IMR-90 (cell line): ENCODE measurements at regions of chr12 and their contacts with region 1.

Region 1: DNA sequence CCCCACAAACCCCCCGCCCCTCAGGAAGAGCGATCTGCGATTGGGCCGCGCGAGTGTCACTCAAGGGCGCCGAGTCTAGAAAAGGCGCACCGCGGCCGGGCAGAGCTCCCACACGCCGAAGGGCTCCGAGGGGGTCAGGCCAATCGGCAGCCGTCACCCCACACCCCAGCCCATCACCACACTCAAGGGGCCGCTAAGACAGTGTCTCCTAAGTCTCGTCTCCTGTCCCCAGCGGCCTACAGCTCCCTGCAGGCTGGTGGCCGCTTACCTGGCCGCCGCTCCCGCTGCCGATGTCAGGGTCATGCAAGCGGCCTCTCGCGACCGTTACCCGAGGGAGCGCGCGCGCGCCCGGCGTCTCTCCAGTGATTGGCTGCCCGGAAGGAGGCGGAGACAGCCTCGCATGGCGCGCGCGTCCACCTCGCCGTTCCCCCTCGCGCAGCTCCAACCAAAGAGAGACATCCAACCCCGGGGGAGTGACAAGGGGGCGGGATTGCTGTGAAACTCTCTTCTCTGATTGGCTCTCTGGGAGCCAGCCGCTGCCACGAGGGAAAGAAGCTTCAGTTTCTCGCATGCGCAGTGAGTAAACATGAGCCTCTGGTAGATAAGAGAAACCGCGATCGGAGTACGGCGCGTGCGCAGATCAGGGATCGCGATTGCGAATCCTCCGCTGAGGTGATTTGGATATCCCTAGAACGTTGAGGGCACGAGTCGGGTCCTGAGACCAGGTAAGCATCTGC is at the starts of genes MPHOSPH9 and MTRFR:
- DNase-seq: peak; percentile 99
- ATAC-seq: peak; percentile 97
- H3K4me3 ChIP-seq: peak within 1 kb of the TSS; percentile 70
- H3K27ac ChIP-seq: peak within 1 kb of the TSS; percentile 87
- H3K4me1 ChIP-seq: peaks cover 3% of the 10 kb centered on the region
- H3K27me3 ChIP-seq: no peaks in the 10 kb centered on the region
- CTCF ChIP-seq: no peak
- POLR2A ChIP-seq: peak; percentile 99
- RAD21 ChIP-seq: no peak
- total RNA-seq, gene MPHOSPH9: 17.0 and 30.8 TPM in 2 replicates
- total RNA-seq, gene MTRFR: 10.2 and 12.2 TPM in 2 replicates

Region 2: DNA sequence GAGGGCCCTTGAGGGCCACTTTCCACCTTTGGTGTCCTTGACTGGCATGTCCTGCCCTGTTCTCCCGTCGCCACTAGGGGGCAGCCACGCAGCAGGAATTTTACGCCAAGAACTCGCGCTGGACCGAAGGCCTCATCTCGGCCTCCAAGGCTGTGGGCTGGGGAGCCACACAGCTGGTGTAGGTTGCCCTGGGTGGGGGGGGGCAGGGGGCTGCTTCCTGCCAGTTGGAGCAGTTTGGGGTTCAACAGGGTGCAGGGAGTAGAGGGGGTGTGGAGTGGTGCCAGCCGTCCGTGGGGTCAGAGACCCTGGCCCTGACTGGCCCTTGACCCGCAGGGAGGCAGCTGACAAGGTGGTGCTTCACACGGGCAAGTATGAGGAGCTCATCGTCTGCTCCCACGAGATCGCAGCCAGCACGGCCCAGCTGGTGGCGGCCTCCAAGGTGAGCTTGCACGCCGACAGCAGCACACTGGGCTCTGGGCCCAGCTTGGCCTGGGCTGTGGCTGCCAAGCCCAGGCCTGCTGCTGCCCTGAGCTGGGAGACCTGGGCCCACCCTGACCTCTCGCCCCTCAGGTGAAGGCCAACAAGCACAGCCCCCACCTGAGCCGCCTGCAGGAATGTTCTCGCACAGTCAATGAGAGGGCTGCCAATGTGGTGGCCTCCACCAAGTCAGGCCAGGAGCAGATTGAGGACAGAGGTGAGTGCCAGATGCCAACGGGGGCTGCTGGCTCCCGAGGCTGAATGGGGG is 372.5 kb before region 1 on chr12:
- CTCF ChIA-PET with region 1: no interaction called
- POLR2A ChIA-PET with region 1: no interaction called
- dilution Hi-C with region 1: no loop called
- in situ Hi-C with region 1: loop called (anchors 5 kb)
- intact Hi-C with region 1: loop called (anchors 1 kb)
- DNase-seq: peak; percentile 75
- ATAC-seq: peak; percentile 77
- H3K4me3 ChIP-seq: no peak overlapping the region
- H3K27ac ChIP-seq: no peak overlapping the region
- H3K4me1 ChIP-seq: peaks cover 3% of the 10 kb centered on the region; the same call in 1 of the 2 replicates
- H3K27me3 ChIP-seq: no peaks in the 10 kb centered on the region
- CTCF ChIP-seq: peak; percentile 91
- POLR2A ChIP-seq: peak; percentile 65
- RAD21 ChIP-seq: peak; percentile 95

Region 3: DNA sequence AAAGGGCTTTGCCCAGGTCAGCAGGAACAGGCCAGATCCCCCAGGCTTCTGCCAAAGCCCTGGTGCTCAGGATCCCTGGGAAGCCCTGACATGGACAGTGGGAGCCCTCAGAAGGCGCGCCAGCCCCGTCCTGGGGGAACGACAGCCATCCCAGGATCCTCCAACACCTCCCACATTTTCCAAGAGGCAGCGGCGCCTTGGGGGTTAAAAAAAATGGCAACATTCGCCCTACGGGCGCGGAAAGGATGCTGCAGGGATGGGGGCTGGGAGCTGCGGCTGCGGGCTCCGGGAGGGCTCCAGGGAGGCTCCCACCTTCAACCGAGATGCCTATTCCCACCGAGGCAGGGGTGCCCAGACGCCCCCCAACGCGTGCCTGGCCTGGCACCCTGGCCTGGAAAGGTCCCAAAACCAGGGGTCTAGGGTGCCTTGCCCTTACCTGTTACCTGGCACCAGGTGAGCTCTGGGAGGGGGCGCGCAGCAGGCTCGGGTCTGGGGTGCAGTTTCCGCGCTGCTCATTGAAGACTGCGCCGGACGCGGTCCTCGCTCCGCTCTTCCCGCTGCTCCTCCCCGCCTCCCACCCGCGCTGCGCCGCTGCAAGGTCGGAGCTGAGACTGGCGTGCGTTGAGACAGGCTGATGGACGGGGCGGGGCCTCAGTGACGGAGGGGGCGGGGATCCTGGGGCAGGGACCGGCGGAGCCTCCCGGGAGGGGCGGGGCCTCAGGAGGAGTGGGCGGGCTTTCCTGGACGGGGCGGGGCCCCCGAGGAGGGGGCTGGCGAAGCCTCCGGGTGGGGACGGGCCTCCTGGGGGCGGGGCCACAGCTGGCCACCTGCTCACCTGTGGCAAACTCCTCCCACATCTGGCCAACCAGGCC is 266.9 kb before region 1 on chr12 and contains the start of gene ABCB9:
- CTCF ChIA-PET with region 1: interaction called, 4 read pairs
- POLR2A ChIA-PET with region 1: no interaction called
- dilution Hi-C with region 1: no loop called
- in situ Hi-C with region 1: loop called (anchors 5 kb)
- intact Hi-C with region 1: no loop called
- DNase-seq: peak; percentile 86
- ATAC-seq: peak; percentile 96
- H3K4me3 ChIP-seq: peak within 1 kb of the TSS; percentile 84
- H3K27ac ChIP-seq: no peak within 1 kb of the TSS
- H3K4me1 ChIP-seq: peaks cover 8% of the 10 kb centered on the region
- H3K27me3 ChIP-seq: no peaks in the 10 kb centered on the region
- CTCF ChIP-seq: no peak
- POLR2A ChIP-seq: peak; percentile 30; the same call in 1 of the 2 replicates
- RAD21 ChIP-seq: peak; percentile 17; the same call in 1 of the 2 replicates
- total RNA-seq, gene ABCB9: 5.6 and 7.2 TPM in 2 replicates

Region 4: DNA sequence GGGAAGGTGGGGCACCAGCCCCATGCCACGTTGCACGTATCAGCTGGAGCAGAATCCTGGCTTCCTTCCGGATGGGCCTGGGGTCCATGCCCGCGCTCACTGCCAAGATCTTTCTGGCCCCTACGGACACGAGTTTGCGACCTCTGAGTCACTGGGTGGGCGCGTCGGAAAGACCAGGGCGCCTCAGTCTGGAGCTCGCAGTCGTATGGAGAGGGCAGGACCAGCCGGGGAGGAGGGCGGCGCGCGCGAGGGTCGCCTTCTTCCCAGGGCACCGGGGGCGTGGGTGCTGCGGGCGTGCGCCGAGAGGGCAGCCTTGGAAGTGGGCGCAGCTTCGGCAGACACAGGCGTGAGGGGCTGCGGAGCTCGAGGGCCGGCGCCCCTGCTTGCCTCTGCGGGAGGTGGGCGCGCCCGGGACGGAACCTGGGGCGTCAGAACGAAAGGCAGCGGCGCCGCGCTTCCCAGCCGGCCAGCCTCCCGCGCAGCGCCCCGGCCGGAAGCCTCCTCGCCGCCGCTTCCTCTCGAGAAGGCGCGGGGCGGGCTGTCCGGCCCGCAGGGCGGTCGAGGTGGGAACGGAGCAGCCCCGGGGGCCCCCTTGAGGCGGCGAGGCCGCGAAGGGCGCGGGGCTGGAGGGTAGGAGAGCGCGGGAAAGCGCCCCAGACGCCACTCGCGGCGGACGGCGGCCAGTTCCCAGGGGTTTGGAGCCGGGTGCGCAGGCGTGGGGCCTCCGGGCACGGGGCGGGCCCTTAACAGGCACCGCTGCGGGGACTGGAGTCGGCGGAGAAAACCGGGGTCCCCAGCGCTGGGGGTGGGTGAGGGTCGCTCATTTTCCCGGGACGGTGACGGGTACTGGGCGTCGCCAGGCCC is 252.6 kb before region 1 on chr12 and contains the start of gene ARL6IP4:
- CTCF ChIA-PET with region 1: interaction called, 3 read pairs
- POLR2A ChIA-PET with region 1: interaction called, 6 read pairs
- dilution Hi-C with region 1: loop called (anchors 25 kb)
- in situ Hi-C with region 1: no loop called
- intact Hi-C with region 1: loop called (anchors 1 kb)
- DNase-seq: peak; percentile 54
- ATAC-seq: peak; percentile 69
- H3K4me3 ChIP-seq: peak within 1 kb of the TSS; percentile 85
- H3K27ac ChIP-seq: peak within 1 kb of the TSS; percentile 89
- H3K4me1 ChIP-seq: peaks cover 32% of the 10 kb centered on the region
- H3K27me3 ChIP-seq: no peaks in the 10 kb centered on the region
- CTCF ChIP-seq: no peak
- POLR2A ChIP-seq: peak; percentile 54; the same call in 1 of the 2 replicates
- RAD21 ChIP-seq: no peak; the same call in 1 of the 2 replicates
- total RNA-seq, gene ARL6IP4: 161 and 205 TPM in 2 replicates

Region 5: DNA sequence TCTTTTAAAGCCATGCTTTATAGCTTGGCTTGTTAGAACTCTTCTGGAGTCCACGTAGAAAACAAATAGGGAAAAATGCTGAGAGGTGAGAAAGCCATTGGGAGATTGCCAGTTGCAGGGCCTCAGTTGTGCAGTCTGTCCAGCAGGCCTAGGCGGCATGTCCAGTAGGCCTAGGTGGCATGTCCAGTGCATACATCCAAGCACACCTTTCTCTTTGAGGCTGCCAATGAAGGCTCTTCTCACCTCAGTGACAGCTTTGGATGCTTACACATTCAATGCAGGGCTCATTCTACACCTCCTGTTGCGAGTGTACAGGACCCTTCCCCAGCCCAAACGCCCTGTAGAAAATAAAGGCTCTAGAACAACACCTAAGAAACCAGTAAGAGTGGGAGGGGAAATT is 25.6 kb after region 1 on chr12:
- CTCF ChIA-PET with region 1: no interaction called
- POLR2A ChIA-PET with region 1: no interaction called
- dilution Hi-C with region 1: no loop called
- in situ Hi-C with region 1: no loop called
- intact Hi-C with region 1: no loop called
- DNase-seq: no peak
- ATAC-seq: no peak
- H3K4me3 ChIP-seq: no peak overlapping the region
- H3K27ac ChIP-seq: no peak overlapping the region
- H3K4me1 ChIP-seq: no peaks in the 10 kb centered on the region
- H3K27me3 ChIP-seq: no peaks in the 10 kb centered on the region
- CTCF ChIP-seq: no peak
- POLR2A ChIP-seq: no peak
- RAD21 ChIP-seq: no peak